Gastrocnemius medialis (tissue), 4 donors: ENCODE measurements at regions of chr17 and their contacts with region 1.

Region 1: GRCh38 chr17:27968206-27968732 is 74.2 kb upstream of the NLK start:
- DNase-seq: no peak
- ATAC-seq: no peak
- H3K4me3 ChIP-seq: no peak overlapping the region
- H3K27ac ChIP-seq: no peak overlapping the region
- H3K4me1 ChIP-seq: no peaks in the 10 kb centered on the region
- H3K27me3 ChIP-seq: no peaks in the 10 kb centered on the region
- CTCF ChIP-seq: no peak
- POLR2A ChIP-seq: no peak

Region 2: GRCh38 chr17:27907976-27908558 is 60.2 kb before region 1 on chr17:
- in situ Hi-C with region 1: loop called in 1 of 4 experiments (anchors 10 kb)
- intact Hi-C with region 1: no loop called
- DNase-seq: no peak
- ATAC-seq: no peak
- H3K4me3 ChIP-seq: no peak overlapping the region
- H3K27ac ChIP-seq: no peak overlapping the region
- H3K4me1 ChIP-seq: no peaks in the 10 kb centered on the region
- H3K27me3 ChIP-seq: no peaks in the 10 kb centered on the region
- CTCF ChIP-seq: no peak
- POLR2A ChIP-seq: no peak

Region 3: DNA sequence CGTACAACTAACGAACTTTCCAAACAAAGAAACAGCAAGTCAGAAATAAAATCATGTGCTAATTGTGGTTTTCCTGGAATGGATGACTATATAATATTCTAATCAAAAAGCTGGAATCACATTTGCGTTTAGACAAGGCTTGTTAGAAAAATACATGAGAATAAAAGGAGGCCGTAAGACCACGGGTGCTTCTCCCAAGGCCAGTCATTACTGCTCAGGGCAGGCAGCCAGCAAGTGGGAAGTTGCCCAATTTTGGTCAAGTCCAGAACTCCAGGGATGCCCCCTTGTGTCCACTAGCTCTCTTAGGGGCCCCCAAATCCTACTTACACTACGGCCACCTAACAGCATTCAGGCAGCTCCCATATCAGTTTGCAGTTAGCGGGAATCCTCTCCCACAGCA is 49.2 kb before region 1 on chr17:
- in situ Hi-C with region 1: no loop called
- intact Hi-C with region 1: no loop called
- DNase-seq: no peak
- ATAC-seq: no peak
- H3K4me3 ChIP-seq: no peak overlapping the region
- H3K27ac ChIP-seq: no peak overlapping the region
- H3K4me1 ChIP-seq: no peaks in the 10 kb centered on the region
- H3K27me3 ChIP-seq: no peaks in the 10 kb centered on the region
- CTCF ChIP-seq: no peak
- POLR2A ChIP-seq: no peak

Region 4: GRCh38 chr17:27996208-27997043 is 28.2 kb after region 1 on chr17:
- in situ Hi-C with region 1: no loop called
- intact Hi-C with region 1: no loop called
- DNase-seq: no peak
- ATAC-seq: no peak
- H3K4me3 ChIP-seq: no peak overlapping the region
- H3K27ac ChIP-seq: no peak overlapping the region
- H3K4me1 ChIP-seq: no peaks in the 10 kb centered on the region
- H3K27me3 ChIP-seq: no peaks in the 10 kb centered on the region
- CTCF ChIP-seq: no peak
- POLR2A ChIP-seq: no peak

Region 5: GRCh38 chr17:28193241-28193640 is 225.0 kb after region 1 on chr17:
- in situ Hi-C with region 1: no loop called
- intact Hi-C with region 1: no loop called
- DNase-seq: peak; percentile 10 to 48
- ATAC-seq: no peak
- H3K4me3 ChIP-seq: no peak overlapping the region
- H3K27ac ChIP-seq: no peak overlapping the region
- H3K4me1 ChIP-seq: no peaks in the 10 kb centered on the region
- H3K27me3 ChIP-seq: no peaks in the 10 kb centered on the region
- CTCF ChIP-seq: no peak
- POLR2A ChIP-seq: no peak